Activated CD8-positive, alpha-beta T cell treated with anti-CD3 and anti-CD28 coated beads for 36 hours (primary cell): ENCODE measurements at regions of chr22 and their contacts with region 1.

Region 1: DNA sequence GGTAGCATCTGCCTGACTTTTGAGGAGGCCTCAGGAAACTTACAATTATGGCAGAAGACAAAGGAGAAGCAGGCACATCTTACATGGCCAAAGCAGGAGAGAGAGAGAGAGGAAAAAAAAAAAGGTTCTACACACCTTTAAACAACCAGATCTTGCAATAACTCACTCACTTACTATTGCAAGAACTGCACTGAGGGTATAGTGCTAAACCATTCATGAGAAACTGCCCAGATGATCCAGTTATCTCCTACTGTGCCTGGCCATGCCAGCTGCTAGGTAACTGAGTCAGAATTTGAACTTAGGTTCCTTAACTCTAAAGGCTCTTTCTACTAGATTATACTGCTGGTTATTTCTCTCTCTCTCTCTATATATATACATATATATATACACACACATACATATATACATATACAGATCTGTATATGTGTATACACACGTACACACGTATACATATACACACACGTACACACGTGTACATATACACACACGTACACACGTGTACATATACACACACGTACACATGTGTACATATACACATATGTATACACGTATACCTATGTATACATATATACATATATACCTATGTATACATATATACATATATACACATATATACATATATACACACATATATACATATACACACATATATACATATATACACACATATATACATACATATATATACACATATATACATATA is 7.5 kb downstream of the HORMAD2 start:
- DNase-seq: no peak
- ATAC-seq: no peak
- H3K4me3 Mint-ChIP-seq: no peak overlapping the region
- H3K27ac Mint-ChIP-seq: no peak overlapping the region
- H3K4me1 Mint-ChIP-seq: peaks cover 9% of the 10 kb centered on the region
- H3K27me3 Mint-ChIP-seq: peaks cover 14% of the 10 kb centered on the region
- CTCF ChIP-seq: no peak

Region 2: GRCh38 chr22:29635734-29636357 is 451.9 kb before region 1 on chr22:
- CTCF ChIA-PET with region 1: interaction called, 10 read pairs
- POLR2A ChIA-PET with region 1: no interaction called
- intact Hi-C with region 1: no loop called
- DNase-seq: no peak
- ATAC-seq: peak; percentile 56
- H3K4me3 Mint-ChIP-seq: no peak overlapping the region
- H3K27ac Mint-ChIP-seq: no peak overlapping the region
- H3K4me1 Mint-ChIP-seq: peaks cover 28% of the 10 kb centered on the region
- H3K27me3 Mint-ChIP-seq: no peaks in the 10 kb centered on the region
- CTCF ChIP-seq: peak; percentile 66

Region 3: GRCh38 chr22:30169002-30169401 is 81.2 kb after region 1 on chr22:
- CTCF ChIA-PET with region 1: no interaction called
- POLR2A ChIA-PET with region 1: no interaction called
- intact Hi-C with region 1: no loop called
- DNase-seq: no peak
- ATAC-seq: peak; percentile 67
- H3K4me3 Mint-ChIP-seq: no peak overlapping the region
- H3K27ac Mint-ChIP-seq: no peak overlapping the region
- H3K4me1 Mint-ChIP-seq: peaks cover 6% of the 10 kb centered on the region
- H3K27me3 Mint-ChIP-seq: no peaks in the 10 kb centered on the region
- CTCF ChIP-seq: no peak

Region 4: GRCh38 chr22:30234786-30235470 is 147.2 kb after region 1 on chr22:
- CTCF ChIA-PET with region 1: no interaction called
- POLR2A ChIA-PET with region 1: no interaction called
- intact Hi-C with region 1: no loop called
- DNase-seq: no peak
- ATAC-seq: no peak
- H3K4me3 Mint-ChIP-seq: no peak overlapping the region
- H3K27ac Mint-ChIP-seq: no peak overlapping the region
- H3K4me1 Mint-ChIP-seq: peaks cover 2% of the 10 kb centered on the region
- H3K27me3 Mint-ChIP-seq: no peaks in the 10 kb centered on the region
- CTCF ChIP-seq: no peak

Region 5: GRCh38 chr22:30262917-30263741 is 175.4 kb after region 1 on chr22:
- CTCF ChIA-PET with region 1: no interaction called
- POLR2A ChIA-PET with region 1: no interaction called
- intact Hi-C with region 1: no loop called
- DNase-seq: peak; percentile 88
- ATAC-seq: no peak
- H3K4me3 Mint-ChIP-seq: peak overlapping the region; percentile 95
- H3K27ac Mint-ChIP-seq: peak overlapping the region; percentile 83
- H3K4me1 Mint-ChIP-seq: peaks cover 31% of the 10 kb centered on the region
- H3K27me3 Mint-ChIP-seq: no peaks in the 10 kb centered on the region
- CTCF ChIP-seq: peak; percentile 100